IMR-90 (cell line): ENCODE measurements at regions of chr2 and their contacts with region 1.

Region 1: GRCh38 chr2:158487419-158487818 is 30.7 kb downstream of the PKP4 start:
- DNase-seq: peak; percentile 85
- ATAC-seq: peak; percentile 89
- H3K4me3 ChIP-seq: no peak overlapping the region
- H3K27ac ChIP-seq: no peak overlapping the region
- H3K4me1 ChIP-seq: peaks cover 9% of the 10 kb centered on the region
- H3K27me3 ChIP-seq: no peaks in the 10 kb centered on the region
- CTCF ChIP-seq: no peak
- POLR2A ChIP-seq: no peak
- RAD21 ChIP-seq: no peak

Region 2: GRCh38 chr2:157952558-157952957 is 534.9 kb before region 1 on chr2:
- CTCF ChIA-PET with region 1: no interaction called
- POLR2A ChIA-PET with region 1: no interaction called
- dilution Hi-C with region 1: no loop called
- in situ Hi-C with region 1: no loop called
- intact Hi-C with region 1: no loop called
- DNase-seq: no peak
- ATAC-seq: no peak
- H3K4me3 ChIP-seq: no peak overlapping the region
- H3K27ac ChIP-seq: no peak overlapping the region
- H3K4me1 ChIP-seq: no peaks in the 10 kb centered on the region
- H3K27me3 ChIP-seq: no peaks in the 10 kb centered on the region
- CTCF ChIP-seq: no peak
- POLR2A ChIP-seq: no peak
- RAD21 ChIP-seq: no peak

Region 3: DNA sequence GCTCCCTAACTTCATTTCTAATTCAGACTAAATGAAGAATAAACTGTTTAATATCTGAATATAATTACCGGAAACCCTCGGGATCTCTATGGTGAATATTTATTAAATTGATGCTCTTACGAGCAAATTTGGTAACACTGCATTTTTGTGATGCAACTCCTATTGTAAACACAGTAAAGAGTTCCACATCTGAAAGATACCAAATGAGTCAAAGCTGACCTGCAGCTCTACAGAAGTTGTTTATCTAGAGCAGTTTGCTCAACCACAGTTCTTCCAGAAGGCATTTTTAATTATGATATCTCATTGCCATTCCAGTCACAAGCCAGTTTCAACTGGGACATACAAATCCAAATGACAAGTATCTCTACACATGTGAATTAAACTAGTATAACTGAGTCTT is 99.1 kb after region 1 on chr2:
- CTCF ChIA-PET with region 1: no interaction called
- POLR2A ChIA-PET with region 1: no interaction called
- dilution Hi-C with region 1: no loop called
- in situ Hi-C with region 1: no loop called
- intact Hi-C with region 1: loop called (anchors 5 kb)
- DNase-seq: peak; percentile 95
- ATAC-seq: peak; percentile 93
- H3K4me3 ChIP-seq: no peak overlapping the region
- H3K27ac ChIP-seq: no peak overlapping the region
- H3K4me1 ChIP-seq: peaks cover 2% of the 10 kb centered on the region; the same call in 1 of the 2 replicates
- H3K27me3 ChIP-seq: no peaks in the 10 kb centered on the region
- CTCF ChIP-seq: no peak
- POLR2A ChIP-seq: no peak
- RAD21 ChIP-seq: no peak

Region 4: GRCh38 chr2:158610059-158610458 is 122.6 kb after region 1 on chr2:
- CTCF ChIA-PET with region 1: no interaction called
- POLR2A ChIA-PET with region 1: no interaction called
- dilution Hi-C with region 1: no loop called
- in situ Hi-C with region 1: no loop called
- intact Hi-C with region 1: no loop called
- DNase-seq: no peak
- ATAC-seq: no peak
- H3K4me3 ChIP-seq: no peak overlapping the region
- H3K27ac ChIP-seq: no peak overlapping the region
- H3K4me1 ChIP-seq: no peaks in the 10 kb centered on the region
- H3K27me3 ChIP-seq: no peaks in the 10 kb centered on the region
- CTCF ChIP-seq: no peak
- POLR2A ChIP-seq: no peak
- RAD21 ChIP-seq: no peak

Region 5: GRCh38 chr2:159684796-159685195 is 1197.4 kb after region 1 on chr2:
- CTCF ChIA-PET with region 1: no interaction called
- POLR2A ChIA-PET with region 1: no interaction called
- dilution Hi-C with region 1: no loop called
- in situ Hi-C with region 1: no loop called
- intact Hi-C with region 1: no loop called
- DNase-seq: peak; percentile 75
- ATAC-seq: peak; percentile 73
- H3K4me3 ChIP-seq: no peak overlapping the region
- H3K27ac ChIP-seq: no peak overlapping the region
- H3K4me1 ChIP-seq: peaks cover 3% of the 10 kb centered on the region; the same call in 1 of the 2 replicates
- H3K27me3 ChIP-seq: no peaks in the 10 kb centered on the region
- CTCF ChIP-seq: no peak
- POLR2A ChIP-seq: no peak
- RAD21 ChIP-seq: no peak